CD4-positive, alpha-beta memory T cell (primary cell): ENCODE measurements at regions of chr2 and their contacts with region 1.

Region 1: GRCh38 chr2:152635635-152636298 is 81.5 kb downstream of the PRPF40A start:
- DNase-seq: peak; percentile 48 to 61 (median 55)
- H3K4me3 ChIP-seq: no peak overlapping the region
- H3K4me3 Mint-ChIP-seq: no peak overlapping the region
- H3K27ac ChIP-seq: no peak overlapping the region
- H3K27ac Mint-ChIP-seq: no peak overlapping the region
- H3K4me1 ChIP-seq: no peaks in the 10 kb centered on the region
- H3K4me1 Mint-ChIP-seq: peaks cover 0 to 3% (median 0%) of the 10 kb centered on the region in 4 donors
- H3K27me3 ChIP-seq: no peaks in the 10 kb centered on the region
- H3K27me3 Mint-ChIP-seq: peaks cover 3 to 6% of the 10 kb centered on the region in 2 donors

Region 2: GRCh38 chr2:152036611-152037469 is 598.9 kb before region 1 on chr2:
- CTCF ChIA-PET with region 1: interaction called, 35 read pairs
- POLR2A ChIA-PET with region 1: no interaction called
- intact Hi-C with region 1: loop called (anchors 1 kb)
- DNase-seq: peak in 4 of 5 donors; percentile 34 to 39 (median 37)
- H3K4me3 ChIP-seq: no peak overlapping the region
- H3K4me3 Mint-ChIP-seq: no peak overlapping the region
- H3K27ac ChIP-seq: no peak overlapping the region
- H3K27ac Mint-ChIP-seq: no peak overlapping the region
- H3K4me1 ChIP-seq: no peaks in the 10 kb centered on the region
- H3K4me1 Mint-ChIP-seq: no peaks in the 10 kb centered on the region
- H3K27me3 ChIP-seq: no peaks in the 10 kb centered on the region
- H3K27me3 Mint-ChIP-seq: peaks cover 0 to 2% of the 10 kb centered on the region in 2 donors

Region 3: DNA sequence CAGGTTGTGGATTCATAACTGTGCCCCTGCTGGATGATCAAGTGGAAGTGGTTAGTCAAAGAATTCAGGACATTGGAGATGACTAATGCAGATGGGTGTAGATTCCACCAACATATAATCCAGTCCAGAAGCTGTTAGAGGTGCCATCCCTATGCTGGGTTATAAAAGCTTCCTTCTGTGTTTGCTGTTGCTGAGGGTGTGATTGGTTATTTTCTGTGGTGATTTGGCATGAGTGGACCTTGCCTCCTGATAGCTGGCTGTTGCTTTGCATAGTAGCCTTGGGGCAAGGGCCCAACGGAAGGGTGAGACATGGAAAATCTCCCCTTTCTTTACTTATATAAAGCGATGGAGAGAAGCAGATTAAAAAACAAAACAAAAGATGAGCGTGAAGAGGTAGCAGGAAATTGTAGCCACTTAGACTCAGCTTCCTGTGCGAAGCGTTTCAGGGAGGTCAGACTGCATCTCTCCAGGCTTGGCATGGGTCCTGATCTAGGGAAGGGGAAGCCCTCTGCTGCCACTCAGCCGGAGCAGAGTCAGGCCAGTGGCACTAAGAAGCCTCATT is 110.4 kb before region 1 on chr2:
- CTCF ChIA-PET with region 1: no interaction called
- POLR2A ChIA-PET with region 1: no interaction called
- intact Hi-C with region 1: no loop called
- DNase-seq: no peak
- H3K4me3 ChIP-seq: no peak overlapping the region
- H3K4me3 Mint-ChIP-seq: no peak overlapping the region
- H3K27ac ChIP-seq: no peak overlapping the region
- H3K27ac Mint-ChIP-seq: peak overlapping the region in 1 of 7 donors; percentile 6
- H3K4me1 ChIP-seq: no peaks in the 10 kb centered on the region
- H3K4me1 Mint-ChIP-seq: no peaks in the 10 kb centered on the region
- H3K27me3 ChIP-seq: no peaks in the 10 kb centered on the region
- H3K27me3 Mint-ChIP-seq: peaks cover 3 to 5% of the 10 kb centered on the region in 2 donors

Region 4: DNA sequence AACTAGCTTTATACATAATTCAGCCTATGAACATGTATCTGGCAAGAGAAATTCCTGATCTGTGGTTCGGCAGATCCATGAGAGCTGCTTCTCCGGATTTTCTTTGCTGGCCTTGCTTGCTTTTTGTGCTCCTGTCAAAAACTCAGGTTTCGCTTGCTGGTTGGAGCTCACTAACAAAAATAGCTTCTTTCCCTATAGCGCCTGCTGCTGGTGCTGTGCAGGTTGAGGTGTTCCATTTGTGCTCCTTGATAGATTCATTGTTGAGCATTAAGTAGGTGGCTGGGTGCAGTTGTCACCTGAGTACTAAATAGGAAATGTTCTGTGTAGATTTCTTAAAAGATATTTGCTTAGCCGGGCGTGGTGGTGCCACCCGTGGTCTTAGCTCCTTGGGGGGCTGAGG is 66.6 kb before region 1 on chr2:
- CTCF ChIA-PET with region 1: no interaction called
- POLR2A ChIA-PET with region 1: no interaction called
- intact Hi-C with region 1: no loop called
- DNase-seq: no peak
- H3K4me3 ChIP-seq: no peak overlapping the region
- H3K4me3 Mint-ChIP-seq: no peak overlapping the region
- H3K27ac ChIP-seq: no peak overlapping the region
- H3K27ac Mint-ChIP-seq: no peak overlapping the region
- H3K4me1 ChIP-seq: no peaks in the 10 kb centered on the region
- H3K4me1 Mint-ChIP-seq: peaks cover 0 to 2% (median 0%) of the 10 kb centered on the region in 4 donors
- H3K27me3 ChIP-seq: no peaks in the 10 kb centered on the region
- H3K27me3 Mint-ChIP-seq: peaks cover 11 to 12% of the 10 kb centered on the region in 2 donors

Region 5: GRCh38 chr2:152617456-152618192 is 18.1 kb before region 1 on chr2:
- CTCF ChIA-PET with region 1: interaction called, 12 read pairs
- POLR2A ChIA-PET with region 1: no interaction called
- intact Hi-C with region 1: no loop called
- DNase-seq: no peak
- H3K4me3 ChIP-seq: no peak overlapping the region
- H3K4me3 Mint-ChIP-seq: no peak overlapping the region
- H3K27ac ChIP-seq: no peak overlapping the region
- H3K27ac Mint-ChIP-seq: no peak overlapping the region
- H3K4me1 ChIP-seq: no peaks in the 10 kb centered on the region
- H3K4me1 Mint-ChIP-seq: peaks cover 0 to 4% (median 0%) of the 10 kb centered on the region in 4 donors
- H3K27me3 ChIP-seq: no peaks in the 10 kb centered on the region
- H3K27me3 Mint-ChIP-seq: peaks cover 4% of the 10 kb centered on the region in 2 donors

Region 6: DNA sequence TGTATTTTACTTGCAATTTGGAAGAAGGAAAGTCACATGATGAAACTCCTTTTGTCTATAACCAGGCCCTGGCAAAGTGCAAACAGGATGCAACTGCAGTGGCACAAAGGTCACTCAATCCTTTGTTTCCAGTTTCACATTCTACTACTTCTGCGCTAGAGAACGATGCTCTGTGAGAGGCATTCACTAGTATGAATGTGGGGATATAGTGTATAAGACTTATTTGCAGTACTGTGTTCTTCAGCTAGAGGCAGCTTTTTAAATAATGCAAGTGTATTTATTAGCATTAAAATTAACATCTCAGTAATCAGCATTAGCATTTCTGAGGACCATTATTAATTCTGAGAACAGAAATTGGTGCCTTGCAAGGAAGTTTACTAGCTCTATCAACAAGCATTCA is 12.6 kb after region 1 on chr2:
- CTCF ChIA-PET with region 1: interaction called, 17 read pairs
- POLR2A ChIA-PET with region 1: no interaction called
- intact Hi-C with region 1: no loop called
- DNase-seq: no peak
- H3K4me3 ChIP-seq: no peak overlapping the region
- H3K4me3 Mint-ChIP-seq: no peak overlapping the region
- H3K27ac ChIP-seq: no peak overlapping the region
- H3K27ac Mint-ChIP-seq: peak overlapping the region in 1 of 7 donors; percentile 35
- H3K4me1 ChIP-seq: no peaks in the 10 kb centered on the region
- H3K4me1 Mint-ChIP-seq: peaks cover 0 to 2% (median 0%) of the 10 kb centered on the region in 4 donors
- H3K27me3 ChIP-seq: no peaks in the 10 kb centered on the region
- H3K27me3 Mint-ChIP-seq: no peaks in the 10 kb centered on the region

Region 7: DNA sequence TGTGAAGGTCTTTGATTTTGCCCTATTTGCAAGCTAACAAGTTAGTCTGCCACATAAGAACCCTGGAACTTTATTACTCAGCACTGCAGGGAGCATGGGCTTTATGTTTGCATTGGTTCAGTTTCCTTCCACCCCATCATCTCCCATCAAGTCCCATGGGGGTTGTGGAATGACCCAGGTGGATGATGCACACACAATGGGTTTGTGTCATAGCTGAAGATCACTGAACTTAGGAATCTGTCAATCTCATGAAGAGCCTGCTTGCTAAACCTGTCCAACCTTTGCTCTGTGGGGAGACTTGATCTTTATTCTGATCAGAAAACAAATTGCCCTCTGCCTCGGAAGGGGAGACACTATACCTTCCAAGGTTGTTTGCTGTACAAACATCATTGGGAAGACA is 577.3 kb after region 1 on chr2:
- CTCF ChIA-PET with region 1: no interaction called
- POLR2A ChIA-PET with region 1: no interaction called
- intact Hi-C with region 1: no loop called
- DNase-seq: no peak
- H3K4me3 ChIP-seq: no peak overlapping the region
- H3K4me3 Mint-ChIP-seq: no peak overlapping the region
- H3K27ac ChIP-seq: no peak overlapping the region
- H3K27ac Mint-ChIP-seq: no peak overlapping the region
- H3K4me1 ChIP-seq: no peaks in the 10 kb centered on the region
- H3K4me1 Mint-ChIP-seq: no peaks in the 10 kb centered on the region
- H3K27me3 ChIP-seq: no peaks in the 10 kb centered on the region
- H3K27me3 Mint-ChIP-seq: peaks cover 0 to 2% of the 10 kb centered on the region in 2 donors